GM18951 (cell line): ENCODE measurements at regions of chr7 and their contacts with region 1.

Region 1: GRCh38 chr7:55280031-55280454 is 85.1 kb upstream of the LANCL2 start:
- POLR2A ChIP-seq: no peak

Region 2: DNA sequence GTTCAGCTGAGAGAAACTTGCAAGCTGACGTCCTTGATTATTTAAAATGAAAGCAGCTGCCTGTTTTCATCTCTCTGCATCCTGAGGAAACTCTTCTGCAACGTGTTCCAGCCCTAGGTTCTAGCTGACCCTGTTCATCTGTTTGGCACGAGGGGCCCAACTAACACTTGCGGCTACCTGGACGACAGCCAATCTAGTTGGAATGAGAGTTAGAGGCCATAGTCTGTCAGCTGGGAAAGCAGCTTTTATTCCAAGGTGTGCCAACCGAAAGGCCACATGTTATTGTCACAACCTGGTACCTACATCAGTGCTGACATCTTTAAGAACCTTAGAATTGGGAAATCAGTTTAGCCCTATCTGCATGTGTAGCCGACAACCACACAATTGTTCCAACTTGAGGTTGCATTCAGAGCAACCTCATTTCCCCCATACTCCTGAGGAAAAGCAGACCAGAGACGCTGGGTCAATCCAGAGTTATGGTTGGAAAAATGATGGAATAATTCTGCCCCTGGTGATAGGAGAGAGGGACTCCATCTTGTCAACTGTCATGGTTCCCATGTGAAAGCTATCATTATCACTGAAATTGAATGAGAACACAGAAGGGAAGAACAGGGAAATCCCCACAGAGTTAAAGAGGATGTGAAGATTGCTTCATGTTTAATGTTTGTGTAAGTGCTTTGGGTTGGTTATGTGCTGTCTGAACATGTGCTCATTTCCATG is 139.7 kb before region 1 on chr7:
- in situ Hi-C with region 1: no loop called
- POLR2A ChIP-seq: no peak

Region 3: DNA sequence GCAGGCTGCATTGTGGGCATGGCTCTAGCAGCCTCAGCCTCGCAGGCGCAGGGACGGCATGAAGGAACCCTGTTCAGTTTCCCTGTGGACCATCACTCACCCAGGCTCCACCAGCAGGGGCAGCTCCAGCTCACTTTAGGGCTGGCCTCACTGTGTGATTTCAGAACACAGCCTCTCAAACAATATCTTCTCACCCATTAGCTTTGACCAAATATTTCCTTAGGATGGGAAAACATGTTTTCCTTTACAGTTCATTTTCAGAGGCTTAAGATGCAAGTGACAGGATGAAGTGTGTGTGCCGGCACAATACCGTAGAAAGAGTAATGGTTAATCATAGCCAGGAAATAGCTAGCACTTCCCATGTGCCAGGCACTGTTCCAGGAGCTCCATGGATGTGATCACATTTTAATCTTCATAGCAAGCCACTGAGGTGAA is 143.3 kb after region 1 on chr7:
- in situ Hi-C with region 1: loop called (anchors 5 kb)
- POLR2A ChIP-seq: no peak

Region 4: DNA sequence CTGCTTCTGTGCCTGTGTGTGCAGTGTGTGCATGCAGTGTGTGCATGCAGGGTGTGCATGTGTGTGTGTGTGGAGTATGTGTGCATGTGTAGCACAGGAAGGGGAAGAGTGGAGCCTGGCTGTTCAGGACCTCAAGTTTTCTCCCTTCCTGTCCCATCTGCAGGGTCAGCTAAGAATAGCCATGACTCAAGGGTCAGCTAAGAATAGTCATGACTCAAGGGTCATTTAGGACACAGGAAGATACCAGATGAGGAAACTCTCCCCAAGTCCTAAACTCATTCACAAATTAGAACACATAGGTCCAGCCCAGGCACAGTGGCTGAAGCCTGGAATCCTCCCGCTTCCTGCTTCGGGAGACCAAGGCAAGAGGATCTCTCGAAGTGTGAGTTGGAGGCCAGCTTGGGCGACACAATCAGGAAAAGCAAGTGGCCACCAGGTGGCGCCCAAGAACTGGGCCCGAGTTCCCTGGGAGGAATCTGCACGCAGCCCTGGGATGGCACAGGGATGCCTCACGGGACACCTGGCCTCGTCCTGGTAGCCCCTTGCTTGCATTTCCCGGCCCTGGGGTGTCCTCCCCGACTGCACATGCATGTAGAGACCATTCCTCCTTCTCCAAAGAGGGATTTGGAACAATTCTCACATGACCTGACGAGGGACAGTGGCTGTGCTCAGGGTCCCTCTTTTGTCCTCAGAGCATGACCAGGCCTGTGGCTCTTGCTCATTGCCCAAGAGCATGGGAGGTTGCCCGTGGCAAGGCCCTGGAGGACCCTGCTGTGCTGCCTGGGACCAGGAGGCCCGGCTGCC is 313.7 kb after region 1 on chr7:
- in situ Hi-C with region 1: loop called (anchors 25 kb)
- POLR2A ChIP-seq: no peak

Region 5: DNA sequence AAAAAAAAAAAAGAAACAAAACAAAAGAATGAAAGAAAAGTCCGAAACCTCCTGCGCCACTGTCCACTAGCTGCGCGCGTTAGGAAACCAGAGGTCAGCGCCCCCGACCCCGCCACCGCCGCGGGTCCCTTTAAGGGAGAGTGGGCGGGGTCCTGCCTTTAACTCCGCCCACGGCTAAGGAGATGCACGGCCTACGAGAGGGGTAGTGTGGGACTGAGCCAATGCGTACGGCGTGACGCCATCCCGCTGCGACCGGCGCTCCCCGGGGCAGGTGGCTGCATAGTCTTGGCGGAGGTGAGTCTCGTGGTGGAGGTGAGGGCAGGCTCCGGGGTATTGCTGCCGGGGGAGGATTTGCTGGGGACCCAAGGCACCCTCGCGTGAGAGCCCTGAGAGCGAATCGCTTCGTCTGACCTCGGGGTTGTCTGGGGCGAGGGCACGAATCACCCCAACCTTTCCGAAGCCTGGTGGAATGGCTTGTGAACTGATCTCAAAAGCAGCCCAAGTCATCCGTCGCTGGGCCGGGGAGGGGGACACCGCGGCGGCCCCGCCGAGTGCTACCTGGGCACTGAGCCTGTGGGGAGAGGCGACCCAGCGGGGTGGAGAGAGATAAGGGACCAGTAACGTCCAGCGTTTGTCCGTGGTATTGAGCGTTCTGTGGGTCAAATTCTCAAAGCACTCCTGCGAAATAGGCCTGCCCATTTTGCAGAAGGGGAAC is 671.8 kb after region 1 on chr7 and contains the start of gene MRPS17:
- in situ Hi-C with region 1: loop called (anchors 25 kb)
- POLR2A ChIP-seq: peak; percentile 93